GM12878 (cell line): ENCODE measurements at regions of chr2 and their contacts with region 1.

Region 1: GRCh38 chr2:213232649-213233437 is 51.4 kb upstream of the SPAG16 start:
- DNase-seq: peak; percentile 100
- ATAC-seq: peak; percentile 72
- H3K4me3 ChIP-seq: peak overlapping the region; percentile 13; the same call in 1 of the 2 replicates
- H3K27ac ChIP-seq: peak overlapping the region; percentile 98
- H3K4me1 ChIP-seq: peaks cover 56% of the 10 kb centered on the region
- H3K27me3 ChIP-seq: no peaks in the 10 kb centered on the region
- CTCF ChIP-seq: no peak
- EP300 ChIP-seq: peak; percentile 70 to 93; a peak in 3 of 4 replicates
- POLR2A ChIP-seq: peak; percentile 60; the same call in 1 of the 2 replicates
- RAD21 ChIP-seq: peak; percentile 39; the same call in 1 of the 2 replicates

Region 2: GRCh38 chr2:212730994-212731393 is 501.8 kb before region 1 on chr2:
- CTCF ChIA-PET with region 1: no interaction called
- POLR2A ChIA-PET with region 1: no interaction called
- RAD21 ChIA-PET with region 1: no interaction called
- SMC1A ChIA-PET with region 1: no interaction called
- in situ Hi-C with region 1: no loop called
- intact Hi-C with region 1: loop called (anchors 2 kb)
- DNase-seq: peak; percentile 79
- ATAC-seq: peak; percentile 78
- H3K4me3 ChIP-seq: no peak overlapping the region
- H3K27ac ChIP-seq: 0 out of 2 replicates have a peak overlapping the region, but pooled peaks have one; percentile 27
- H3K4me1 ChIP-seq: peaks cover 16% of the 10 kb centered on the region
- H3K27me3 ChIP-seq: no peaks in the 10 kb centered on the region
- CTCF ChIP-seq: no peak
- EP300 ChIP-seq: peak; percentile 55 to 81; a peak in 2 of 4 replicates
- POLR2A ChIP-seq: no peak
- RAD21 ChIP-seq: peak; percentile 21; the same call in 1 of the 2 replicates

Region 3: DNA sequence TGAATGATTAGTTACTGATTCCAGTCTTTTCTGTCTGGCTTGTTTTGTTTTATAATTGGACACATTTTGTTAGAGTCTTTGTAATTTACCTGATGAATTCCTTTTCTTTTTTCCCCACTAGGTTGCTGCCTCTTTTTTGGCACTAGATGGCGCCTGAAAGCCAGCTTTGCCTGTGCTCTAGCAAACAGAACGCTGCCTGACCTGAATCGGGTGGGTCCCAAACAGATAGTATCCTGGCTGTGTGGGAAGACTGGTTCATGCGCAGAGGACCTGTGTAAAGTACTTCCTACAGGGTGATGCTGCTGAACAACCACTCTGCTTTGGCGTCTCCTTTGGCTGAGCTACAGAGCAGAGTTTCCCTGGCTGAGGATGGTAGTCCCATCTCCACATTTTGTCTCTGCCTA is 369.7 kb before region 1 on chr2:
- CTCF ChIA-PET with region 1: no interaction called
- POLR2A ChIA-PET with region 1: no interaction called
- RAD21 ChIA-PET with region 1: interaction called, 3 read pairs
- SMC1A ChIA-PET with region 1: no interaction called
- in situ Hi-C with region 1: no loop called
- intact Hi-C with region 1: loop called (anchors 2 kb)
- DNase-seq: peak; percentile 30
- ATAC-seq: peak; percentile 80
- H3K4me3 ChIP-seq: no peak overlapping the region
- H3K27ac ChIP-seq: no peak overlapping the region
- H3K4me1 ChIP-seq: no peaks in the 10 kb centered on the region
- H3K27me3 ChIP-seq: no peaks in the 10 kb centered on the region
- CTCF ChIP-seq: peak; percentile 52 to 69 (median 54); a peak in 4 of 6 replicates
- EP300 ChIP-seq: no peak
- POLR2A ChIP-seq: no peak
- RAD21 ChIP-seq: peak; percentile 82

Region 4: GRCh38 chr2:213021971-213022899 is 210.6 kb before region 1 on chr2:
- CTCF ChIA-PET with region 1: interaction called, 6 read pairs
- POLR2A ChIA-PET with region 1: interaction called, 18 read pairs
- RAD21 ChIA-PET with region 1: interaction called, 72 read pairs
- SMC1A ChIA-PET with region 1: interaction called, 237 read pairs
- in situ Hi-C with region 1: loop called (anchors 5 kb)
- intact Hi-C with region 1: loop called (anchors 1 kb)
- DNase-seq: peak; percentile 87
- ATAC-seq: peak; percentile 78
- H3K4me3 ChIP-seq: peak overlapping the region; percentile 76
- H3K27ac ChIP-seq: peak overlapping the region; percentile 96
- H3K4me1 ChIP-seq: peaks cover 14% of the 10 kb centered on the region; the same call in 1 of the 2 replicates
- H3K27me3 ChIP-seq: no peaks in the 10 kb centered on the region
- CTCF ChIP-seq: no peak
- EP300 ChIP-seq: peak; percentile 80 to 87
- POLR2A ChIP-seq: peak; percentile 88
- RAD21 ChIP-seq: peak; percentile 27; the same call in 1 of the 2 replicates

Region 5: GRCh38 chr2:213166109-213166508 is 66.7 kb before region 1 on chr2:
- CTCF ChIA-PET with region 1: interaction called, 9 read pairs
- POLR2A ChIA-PET with region 1: interaction called, 4 read pairs
- RAD21 ChIA-PET with region 1: interaction called, 540 read pairs
- SMC1A ChIA-PET with region 1: interaction called, 467 read pairs
- in situ Hi-C with region 1: loop called (anchors 5 kb)
- intact Hi-C with region 1: loop called (anchors 1 kb)
- DNase-seq: no peak
- ATAC-seq: peak; percentile 93
- H3K4me3 ChIP-seq: no peak overlapping the region
- H3K27ac ChIP-seq: peak overlapping the region; percentile 76
- H3K4me1 ChIP-seq: peaks cover 35% of the 10 kb centered on the region
- H3K27me3 ChIP-seq: no peaks in the 10 kb centered on the region
- CTCF ChIP-seq: no peak
- EP300 ChIP-seq: peak in 1 of 2 experiments; percentile 19; a peak in 2 of 4 replicates
- POLR2A ChIP-seq: no peak
- RAD21 ChIP-seq: no peak

Region 6: DNA sequence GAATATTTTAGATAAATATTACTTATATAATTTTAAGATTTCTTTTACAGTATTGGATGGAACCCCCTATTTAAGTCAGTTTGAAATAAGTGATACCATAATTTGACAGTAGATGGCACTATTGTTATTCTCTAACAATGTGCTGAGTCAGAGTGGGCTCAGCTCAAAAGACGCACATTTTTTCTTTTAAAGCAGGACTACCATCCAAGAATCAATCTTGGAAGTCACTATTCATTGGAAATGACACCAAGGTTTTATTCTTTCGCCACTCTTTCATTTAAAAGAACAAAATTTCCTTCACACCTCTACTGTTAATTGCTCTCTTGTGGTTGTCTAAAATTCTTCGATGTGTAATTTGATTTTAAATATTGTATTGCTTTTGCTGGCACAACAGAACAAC is 18.8 kb after region 1 on chr2:
- CTCF ChIA-PET with region 1: no interaction called
- POLR2A ChIA-PET with region 1: no interaction called
- RAD21 ChIA-PET with region 1: interaction called, 67 read pairs
- SMC1A ChIA-PET with region 1: interaction called, 26 read pairs
- in situ Hi-C with region 1: no loop called
- intact Hi-C with region 1: no loop called
- DNase-seq: no peak
- ATAC-seq: peak; percentile 87
- H3K4me3 ChIP-seq: no peak overlapping the region
- H3K27ac ChIP-seq: no peak overlapping the region
- H3K4me1 ChIP-seq: peaks cover 6% of the 10 kb centered on the region; the same call in 1 of the 2 replicates
- H3K27me3 ChIP-seq: no peaks in the 10 kb centered on the region
- CTCF ChIP-seq: peak; percentile 38 to 73 (median 47); a peak in 5 of 6 replicates
- EP300 ChIP-seq: no peak
- POLR2A ChIP-seq: no peak
- RAD21 ChIP-seq: peak; percentile 90

Region 7: DNA sequence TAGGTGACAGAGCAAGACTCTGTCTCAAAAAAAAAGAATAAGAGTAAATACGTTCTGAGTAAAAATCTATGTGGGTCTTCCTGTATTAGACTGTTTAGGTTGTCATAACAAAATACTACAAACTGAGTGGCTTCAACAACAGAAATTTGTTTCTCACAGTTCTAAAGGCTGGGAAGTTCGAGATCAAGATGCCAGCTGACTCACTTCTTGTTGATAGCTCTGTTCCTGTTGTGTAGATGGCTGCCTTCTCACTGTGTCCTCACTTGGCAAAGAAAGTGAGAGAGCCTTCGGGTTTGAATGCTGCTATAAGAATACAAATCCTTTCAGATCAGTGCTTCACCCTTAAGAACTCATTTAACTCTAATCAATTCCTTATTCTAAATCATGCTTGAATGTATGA is 748.0 kb after region 1 on chr2:
- CTCF ChIA-PET with region 1: no interaction called
- POLR2A ChIA-PET with region 1: no interaction called
- RAD21 ChIA-PET with region 1: no interaction called
- SMC1A ChIA-PET with region 1: no interaction called
- in situ Hi-C with region 1: no loop called
- intact Hi-C with region 1: no loop called
- DNase-seq: no peak
- ATAC-seq: no peak
- H3K4me3 ChIP-seq: no peak overlapping the region
- H3K27ac ChIP-seq: no peak overlapping the region
- H3K4me1 ChIP-seq: no peaks in the 10 kb centered on the region
- H3K27me3 ChIP-seq: no peaks in the 10 kb centered on the region
- CTCF ChIP-seq: no peak
- EP300 ChIP-seq: no peak
- POLR2A ChIP-seq: no peak
- RAD21 ChIP-seq: no peak